ENCODE measurements at regions of chr9 and their contacts with region 1.

Region 1: GRCh38 chr9:33124751-33125381 is 42.3 kb downstream of the B4GALT1 start:
- DNase-seq: no peak
- ATAC-seq: peak; percentile 72
- H3K4me3 Mint-ChIP-seq: peak overlapping the region; percentile 74
- H3K27ac Mint-ChIP-seq: peak overlapping the region; percentile 96
- H3K4me1 Mint-ChIP-seq: peaks cover 88% of the 10 kb centered on the region
- H3K27me3 Mint-ChIP-seq: no peaks in the 10 kb centered on the region
- CTCF ChIP-seq: no peak

Region 2: GRCh38 chr9:33159760-33160127 is 34.9 kb after region 1 on chr9:
- CTCF ChIA-PET with region 1: interaction called, 5 read pairs
- POLR2A ChIA-PET with region 1: interaction called, 365 read pairs
- intact Hi-C with region 1: loop called (anchors 1 kb)
- DNase-seq: no peak
- ATAC-seq: peak; percentile 47
- H3K4me3 Mint-ChIP-seq: peak overlapping the region; percentile 97
- H3K27ac Mint-ChIP-seq: peak overlapping the region; percentile 95
- H3K4me1 Mint-ChIP-seq: peaks cover 99% of the 10 kb centered on the region
- H3K27me3 Mint-ChIP-seq: no peaks in the 10 kb centered on the region
- CTCF ChIP-seq: no peak

Measured in activated B cell treated with CpG ODN at 0.5 μM for 24 hours (primary cell).